ENCODE measurements at regions of chr3 and their contacts with region 1.

Region 1: DNA sequence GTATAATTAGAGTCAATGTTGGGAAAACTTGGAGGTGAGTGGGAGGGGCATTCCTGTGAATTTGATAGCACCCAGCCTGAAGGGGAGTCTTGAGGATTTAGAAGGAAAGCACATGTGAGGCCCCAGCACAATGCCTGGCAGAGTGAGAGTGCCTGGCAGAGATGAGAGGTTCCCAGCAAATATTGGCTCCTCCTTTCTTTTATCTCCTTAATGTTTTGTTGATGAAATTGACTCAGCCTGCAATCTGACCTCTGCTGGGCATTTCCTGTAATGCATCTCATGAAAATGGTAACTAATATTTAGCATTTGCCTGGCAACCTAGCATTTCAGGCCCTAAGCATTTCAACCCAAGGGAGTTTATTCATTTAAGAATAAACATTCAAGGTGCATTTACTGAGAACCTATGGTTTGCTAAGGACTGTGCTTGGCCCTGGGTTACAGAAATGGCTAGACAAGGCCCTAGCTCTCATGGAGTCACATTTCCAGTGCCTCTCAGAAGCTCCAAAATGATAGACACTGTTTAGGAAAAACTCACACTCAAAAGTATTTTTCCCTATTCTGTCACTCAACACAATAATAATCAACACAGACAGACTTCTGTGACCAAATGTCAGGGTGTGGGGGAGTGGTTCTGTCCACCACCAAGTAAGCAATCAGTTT is 19.0 kb downstream of the PDHB start:
- DNase-seq: peak in 7 of 9 donors; percentile 39 to 59 (median 47)
- ATAC-seq: peak; percentile 83
- H3K4me3 ChIP-seq: no peak overlapping the region
- H3K4me3 Mint-ChIP-seq: no peak overlapping the region
- H3K27ac ChIP-seq: no peak overlapping the region
- H3K27ac Mint-ChIP-seq: peak overlapping the region in 3 of 9 donors; percentile 5 to 48 (median 9)
- H3K4me1 ChIP-seq: no peaks in the 10 kb centered on the region
- H3K4me1 Mint-ChIP-seq: peaks cover 2 to 14% (median 8%) of the 10 kb centered on the region in 7 donors
- H3K27me3 ChIP-seq: no peaks in the 10 kb centered on the region
- H3K27me3 Mint-ChIP-seq: no peaks in the 10 kb centered on the region

Region 2: GRCh38 chr3:58177747-58178527 is 236.7 kb before region 1 on chr3:
- CTCF ChIA-PET with region 1: interaction called, 3 read pairs
- POLR2A ChIA-PET with region 1: no interaction called
- intact Hi-C with region 1: loop called (anchors 5 to 10 kb)
- DNase-seq: peak; percentile 72 to 92 (median 84)
- ATAC-seq: peak; percentile 94
- H3K4me3 ChIP-seq: peak overlapping the region; percentile 49
- H3K4me3 Mint-ChIP-seq: peak overlapping the region; percentile 51 to 84 (median 74)
- H3K27ac ChIP-seq: no peak overlapping the region
- H3K27ac Mint-ChIP-seq: peak overlapping the region in 3 of 9 donors; percentile 18 to 43 (median 29)
- H3K4me1 ChIP-seq: peaks cover 6 to 8% of the 10 kb centered on the region in 2 donors
- H3K4me1 Mint-ChIP-seq: peaks cover 4 to 17% (median 13%) of the 10 kb centered on the region in 7 donors
- H3K27me3 ChIP-seq: no peaks in the 10 kb centered on the region
- H3K27me3 Mint-ChIP-seq: peaks cover 0 to 4% (median 0%) of the 10 kb centered on the region in 5 donors

Region 3: GRCh38 chr3:58237238-58237940 is 177.3 kb before region 1 on chr3 and contains the start of gene ABHD6:
- CTCF ChIA-PET with region 1: no interaction called
- POLR2A ChIA-PET with region 1: no interaction called
- intact Hi-C with region 1: loop called in 1 of 2 experiments (anchors 1 kb)
- DNase-seq: peak; percentile 58 to 95 (median 86)
- ATAC-seq: peak; percentile 91
- H3K4me3 ChIP-seq: peak within 1 kb of the TSS; percentile 86
- H3K4me3 Mint-ChIP-seq: peak within 1 kb of the TSS; percentile 84 to 98 (median 92)
- H3K27ac ChIP-seq: peak within 1 kb of the TSS; percentile 72
- H3K27ac Mint-ChIP-seq: peak within 1 kb of the TSS; percentile 50 to 87 (median 81)
- H3K4me1 ChIP-seq: peaks cover 6 to 12% of the 10 kb centered on the region in 2 donors
- H3K4me1 Mint-ChIP-seq: peaks cover 9 to 18% (median 13%) of the 10 kb centered on the region in 7 donors
- H3K27me3 ChIP-seq: no peaks in the 10 kb centered on the region
- H3K27me3 Mint-ChIP-seq: peaks cover 0 to 29% (median 13%) of the 10 kb centered on the region in 5 donors
- total RNA-seq, gene ABHD6: 3.1 to 7.3 (median 6.6) TPM

Region 4: GRCh38 chr3:58332575-58333188 is 82.0 kb before region 1 on chr3 and contains the start of gene PXK:
- CTCF ChIA-PET with region 1: interaction called, 3 read pairs
- POLR2A ChIA-PET with region 1: no interaction called
- intact Hi-C with region 1: loop called (anchors 1 kb)
- DNase-seq: peak; percentile 63 to 89 (median 79)
- ATAC-seq: peak; percentile 94
- H3K4me3 ChIP-seq: peak within 1 kb of the TSS; percentile 68
- H3K4me3 Mint-ChIP-seq: peak within 1 kb of the TSS; percentile 83 to 100 (median 99)
- H3K27ac ChIP-seq: peak within 1 kb of the TSS; percentile 70
- H3K27ac Mint-ChIP-seq: peak within 1 kb of the TSS; percentile 65 to 97 (median 88)
- H3K4me1 ChIP-seq: peaks cover 20 to 22% of the 10 kb centered on the region in 2 donors
- H3K4me1 Mint-ChIP-seq: peaks cover 30 to 47% (median 38%) of the 10 kb centered on the region in 7 donors
- H3K27me3 ChIP-seq: no peaks in the 10 kb centered on the region
- H3K27me3 Mint-ChIP-seq: no peaks in the 10 kb centered on the region
- total RNA-seq, gene PXK: 17.3 to 38.9 (median 22.3) TPM